ENCODE measurements at regions of chr15 and their contacts with region 1.

Region 1: GRCh38 chr15:84588053-84588874 is 12.5 kb upstream of the ZSCAN2 start:
- DNase-seq: peak; percentile 91
- H3K4me3 ChIP-seq: peak overlapping the region in 2 of 4 donors; percentile 4 to 28
- H3K27ac ChIP-seq: no peak overlapping the region
- H3K4me1 ChIP-seq: peaks cover 0 to 7% (median 4%) of the 10 kb centered on the region in 4 donors
- H3K27me3 ChIP-seq: no peaks in the 10 kb centered on the region
- CTCF ChIP-seq: peak; percentile 58 to 94 (median 92)
- EP300 ChIP-seq: no peak
- POLR2A ChIP-seq: no peak

Region 2: GRCh38 chr15:84699538-84700191 is 111.4 kb after region 1 on chr15:
- in situ Hi-C with region 1: no loop called
- intact Hi-C with region 1: no loop called
- DNase-seq: no peak
- H3K4me3 ChIP-seq: no peak overlapping the region
- H3K27ac ChIP-seq: no peak overlapping the region
- H3K4me1 ChIP-seq: peaks cover 5 to 30% (median 11%) of the 10 kb centered on the region in 4 donors
- H3K27me3 ChIP-seq: no peaks in the 10 kb centered on the region
- CTCF ChIP-seq: no peak
- EP300 ChIP-seq: no peak
- POLR2A ChIP-seq: no peak

Region 3: GRCh38 chr15:84915011-84915958 is 327.0 kb after region 1 on chr15:
- in situ Hi-C with region 1: loop called in 1 of 4 experiments (anchors 25 kb)
- intact Hi-C with region 1: no loop called
- DNase-seq: peak; percentile 38
- H3K4me3 ChIP-seq: no peak overlapping the region
- H3K27ac ChIP-seq: peak overlapping the region in 3 of 4 donors; percentile 49 to 62 (median 60)
- H3K4me1 ChIP-seq: peaks cover 14 to 36% (median 15%) of the 10 kb centered on the region in 4 donors
- H3K27me3 ChIP-seq: no peaks in the 10 kb centered on the region
- CTCF ChIP-seq: no peak
- EP300 ChIP-seq: no peak
- POLR2A ChIP-seq: no peak